Heart right ventricle (tissue), 16 donors: ENCODE measurements at regions of chr10 and their contacts with region 1.

Region 1: GRCh38 chr10:76558586-76558985 is 1079.0 kb downstream of the KCNMA1 start:
- DNase-seq: no peak
- ATAC-seq: no peak
- H3K4me3 ChIP-seq: no peak overlapping the region
- H3K27ac ChIP-seq: no peak overlapping the region
- H3K4me1 ChIP-seq: peaks cover 0 to 32% (median 10%) of the 10 kb centered on the region in 9 donors
- H3K27me3 ChIP-seq: no peaks in the 10 kb centered on the region
- CTCF ChIP-seq: no peak

Region 2: DNA sequence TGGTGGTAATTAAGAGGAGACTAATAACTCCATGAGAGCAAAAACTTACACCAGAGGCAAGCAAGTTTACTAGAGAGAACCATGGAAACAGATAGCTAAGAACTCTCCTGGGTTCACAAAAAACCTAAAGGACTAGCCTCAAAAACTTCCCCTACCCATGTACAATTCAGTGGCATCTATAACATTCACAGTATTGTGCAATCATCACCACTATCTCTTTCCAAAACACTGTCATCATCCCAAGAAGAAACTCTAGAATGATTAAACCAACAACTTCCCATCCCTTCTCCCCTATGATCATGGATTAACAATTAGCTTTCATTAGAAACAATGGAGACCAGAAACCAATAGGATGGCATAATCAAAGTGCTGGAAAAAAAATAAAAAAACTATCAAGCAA is 88.9 kb before region 1 on chr10:
- intact Hi-C with region 1: no loop called
- DNase-seq: no peak
- ATAC-seq: no peak
- H3K4me3 ChIP-seq: no peak overlapping the region
- H3K27ac ChIP-seq: no peak overlapping the region
- H3K4me1 ChIP-seq: no peaks in the 10 kb centered on the region
- H3K27me3 ChIP-seq: no peaks in the 10 kb centered on the region
- CTCF ChIP-seq: no peak

Region 3: GRCh38 chr10:76543655-76544054 is 14.9 kb before region 1 on chr10:
- intact Hi-C with region 1: no loop called
- DNase-seq: no peak
- ATAC-seq: peak in 3 of 8 donors; percentile 44 to 46 (median 45)
- H3K4me3 ChIP-seq: no peak overlapping the region
- H3K27ac ChIP-seq: no peak overlapping the region
- H3K4me1 ChIP-seq: peaks cover 0 to 15% (median 0%) of the 10 kb centered on the region in 9 donors
- H3K27me3 ChIP-seq: no peaks in the 10 kb centered on the region
- CTCF ChIP-seq: no peak

Region 4: DNA sequence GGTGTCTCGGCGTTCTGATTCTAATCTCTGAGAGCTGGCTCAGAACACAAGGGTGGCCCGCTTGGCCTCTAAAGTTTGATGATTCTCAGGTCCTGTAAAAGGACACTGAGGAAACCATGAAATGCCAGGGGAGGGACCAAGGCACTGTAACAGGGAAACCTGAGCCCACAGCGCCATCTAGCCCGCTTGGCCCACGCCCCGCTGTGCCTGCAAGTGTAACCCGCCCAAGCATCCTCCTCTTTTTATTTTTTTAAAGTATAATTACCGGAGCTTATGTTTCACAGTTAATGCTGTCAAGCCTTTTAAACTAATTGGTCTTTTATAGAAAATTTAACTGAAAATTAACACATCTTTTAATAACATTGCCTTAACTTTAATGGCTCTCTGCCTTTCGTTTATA is 344.4 kb after region 1 on chr10:
- intact Hi-C with region 1: loop called in 2 of 10 experiments (anchors 10 kb)
- DNase-seq: peak; percentile 71 to 78
- ATAC-seq: peak in 7 of 8 donors; percentile 77 to 89 (median 82)
- H3K4me3 ChIP-seq: no peak overlapping the region
- H3K27ac ChIP-seq: no peak overlapping the region
- H3K4me1 ChIP-seq: peaks cover 0 to 3% (median 0%) of the 10 kb centered on the region in 9 donors
- H3K27me3 ChIP-seq: no peaks in the 10 kb centered on the region
- CTCF ChIP-seq: peak in 7 of 9 donors; percentile 43 to 71 (median 58)

Region 5: GRCh38 chr10:76946270-76946669 is 387.7 kb after region 1 on chr10:
- intact Hi-C with region 1: no loop called
- DNase-seq: no peak
- ATAC-seq: peak; percentile 23 to 98 (median 86)
- H3K4me3 ChIP-seq: no peak overlapping the region
- H3K27ac ChIP-seq: no peak overlapping the region
- H3K4me1 ChIP-seq: peaks cover 0 to 11% (median 0%) of the 10 kb centered on the region in 9 donors
- H3K27me3 ChIP-seq: no peaks in the 10 kb centered on the region
- CTCF ChIP-seq: no peak

Region 6: GRCh38 chr10:76984559-76985443 is 426.2 kb after region 1 on chr10:
- intact Hi-C with region 1: loop called in 3 of 10 experiments (anchors 5 to 10 kb)
- DNase-seq: peak; percentile 47 to 58
- ATAC-seq: peak in 6 of 8 donors; percentile 57 to 87 (median 72)
- H3K4me3 ChIP-seq: no peak overlapping the region
- H3K27ac ChIP-seq: no peak overlapping the region
- H3K4me1 ChIP-seq: no peaks in the 10 kb centered on the region
- H3K27me3 ChIP-seq: peaks cover 0 to 8% (median 0%) of the 10 kb centered on the region in 7 donors
- CTCF ChIP-seq: peak; percentile 65 to 97 (median 95)

Region 7: DNA sequence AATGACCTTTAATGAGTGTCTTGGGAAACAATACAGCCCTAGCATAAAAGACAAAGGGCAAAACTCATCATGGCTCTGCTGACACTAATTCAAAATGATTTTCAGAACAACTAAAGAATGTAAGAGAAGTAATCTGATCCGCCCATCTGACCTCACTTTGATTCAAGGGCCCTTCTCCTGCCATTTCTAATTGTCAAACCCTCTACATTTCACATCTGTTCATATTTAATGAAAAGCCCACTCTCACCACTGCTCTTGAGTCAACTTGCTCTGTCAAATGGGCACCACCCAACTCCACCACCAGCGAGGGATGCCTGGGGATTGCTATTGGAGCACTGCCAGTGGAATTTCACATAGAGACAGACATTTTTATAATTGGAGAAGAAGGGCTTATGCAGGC is 439.9 kb after region 1 on chr10:
- intact Hi-C with region 1: loop called in 1 of 10 experiments (anchors 10 kb)
- DNase-seq: no peak
- ATAC-seq: no peak
- H3K4me3 ChIP-seq: no peak overlapping the region
- H3K27ac ChIP-seq: no peak overlapping the region
- H3K4me1 ChIP-seq: peaks cover 0 to 5% (median 0%) of the 10 kb centered on the region in 9 donors
- H3K27me3 ChIP-seq: peaks cover 0 to 5% (median 0%) of the 10 kb centered on the region in 7 donors
- CTCF ChIP-seq: no peak